Activated CD8-positive, alpha-beta T cell treated with anti-CD3 and anti-CD28 coated beads for 36 hours (primary cell): ENCODE measurements at regions of chr5 and their contacts with region 1.

Region 1: DNA sequence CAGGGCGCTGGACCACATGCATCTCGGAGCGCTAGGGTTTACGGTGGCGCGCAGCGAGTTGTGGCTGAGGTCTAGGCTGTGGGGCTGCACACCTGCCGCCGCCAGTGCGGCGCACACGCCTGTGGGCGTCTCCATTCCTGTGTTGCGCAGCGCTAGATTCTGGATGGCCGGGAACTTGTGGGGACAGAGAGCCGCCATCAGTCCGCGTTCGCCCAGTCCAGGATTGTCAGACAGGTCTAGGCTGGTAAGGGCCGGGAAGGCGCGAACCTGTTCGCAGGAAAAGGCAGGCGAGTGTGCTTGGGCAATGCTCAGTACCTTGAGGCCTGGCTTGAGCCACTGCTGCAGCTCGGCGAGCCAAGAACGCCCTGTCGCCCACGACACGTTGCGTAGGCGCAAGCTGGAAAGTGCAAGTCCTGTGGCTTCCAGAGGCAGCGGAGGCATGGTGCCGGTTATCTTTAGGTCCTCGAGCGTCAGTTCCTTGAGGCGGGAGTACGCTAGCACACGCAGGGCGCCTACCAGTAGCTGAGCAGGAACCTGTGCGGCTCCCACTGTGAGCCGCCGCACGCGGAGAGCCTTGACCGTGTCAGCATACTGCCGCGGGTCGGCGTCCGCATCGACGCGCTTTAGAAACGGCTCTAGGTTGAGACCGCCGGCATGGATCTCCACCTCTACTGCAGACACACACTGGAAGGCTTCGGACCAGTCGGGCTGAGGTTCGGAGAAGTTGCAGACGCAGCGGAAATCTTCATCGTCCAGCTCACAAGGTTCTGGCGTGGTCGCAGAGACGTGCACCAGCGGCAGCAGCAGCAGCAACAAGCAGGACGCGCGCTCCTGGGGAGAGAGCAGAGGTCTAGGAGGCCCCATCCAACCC is 590 bp downstream of the CD14 start:
- DNase-seq: peak; percentile 68
- ATAC-seq: peak; percentile 65
- H3K4me3 Mint-ChIP-seq: peak overlapping the region; percentile 74
- H3K27ac Mint-ChIP-seq: peak overlapping the region; percentile 71
- H3K4me1 Mint-ChIP-seq: peaks cover 28% of the 10 kb centered on the region
- H3K27me3 Mint-ChIP-seq: peaks cover 17% of the 10 kb centered on the region
- CTCF ChIP-seq: no peak

Region 2: GRCh38 chr5:140557136-140557805 is 75.1 kb before region 1 on chr5 and contains the start of gene SRA1:
- CTCF ChIA-PET with region 1: interaction called, 6 read pairs
- POLR2A ChIA-PET with region 1: interaction called, 4 read pairs
- intact Hi-C with region 1: loop called (anchors 5 kb)
- DNase-seq: peak; percentile 92
- ATAC-seq: peak; percentile 88
- H3K4me3 Mint-ChIP-seq: peak within 1 kb of the TSS; percentile 81
- H3K27ac Mint-ChIP-seq: peak within 1 kb of the TSS; percentile 89
- H3K4me1 Mint-ChIP-seq: peaks cover 39% of the 10 kb centered on the region
- H3K27me3 Mint-ChIP-seq: no peaks in the 10 kb centered on the region
- CTCF ChIP-seq: no peak
- total RNA-seq, gene SRA1: 47.8 to 49.5 TPM

Region 3: DNA sequence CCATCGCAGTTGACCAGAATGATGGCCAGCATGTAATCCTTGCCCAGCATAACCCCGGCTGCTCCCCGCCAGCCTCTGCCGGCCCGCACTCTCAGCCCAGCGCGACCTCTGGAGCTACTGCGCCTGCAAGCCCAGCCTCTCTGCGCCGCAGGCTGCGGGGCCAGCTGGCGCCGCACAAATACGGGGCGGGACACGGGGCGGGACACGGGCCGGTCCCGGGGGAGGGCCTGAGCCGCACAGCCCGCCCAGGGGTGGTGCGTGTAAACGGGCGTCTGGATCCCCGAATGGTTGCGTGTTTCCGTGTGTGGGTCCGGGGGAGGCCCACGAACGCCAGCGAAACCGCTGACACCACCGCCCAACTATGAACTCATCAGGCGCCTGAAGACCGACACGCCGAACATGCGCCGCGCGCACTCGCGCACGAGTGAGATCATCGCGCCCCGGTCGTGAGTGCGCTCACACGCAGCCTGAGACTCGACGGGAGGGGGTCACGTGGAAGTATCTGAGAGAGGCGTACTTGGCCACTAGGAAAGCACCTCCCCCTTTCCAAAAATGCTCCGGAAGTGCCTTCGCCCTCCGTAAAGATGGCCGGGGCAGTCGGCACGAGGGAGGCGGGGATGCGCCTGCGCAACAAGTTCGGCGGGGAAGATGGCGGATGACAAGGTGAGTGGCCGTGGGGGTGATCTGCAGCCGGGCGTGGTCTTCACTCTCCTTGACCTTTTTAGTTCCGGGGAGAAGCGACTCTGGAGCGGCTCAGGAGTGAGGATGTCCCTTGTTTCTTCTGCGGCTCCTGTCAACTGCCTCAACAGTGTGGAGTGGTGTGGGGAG is 68.0 kb before region 1 on chr5 and contains the starts of genes APBB3 and SLC35A4:
- CTCF ChIA-PET with region 1: interaction called, 12 read pairs
- POLR2A ChIA-PET with region 1: interaction called, 4 read pairs
- intact Hi-C with region 1: loop called (anchors 5 kb)
- DNase-seq: peak; percentile 97
- ATAC-seq: peak; percentile 95
- H3K4me3 Mint-ChIP-seq: peak within 1 kb of the TSS; percentile 88
- H3K27ac Mint-ChIP-seq: peak within 1 kb of the TSS; percentile 90
- H3K4me1 Mint-ChIP-seq: peaks cover 54% of the 10 kb centered on the region
- H3K27me3 Mint-ChIP-seq: no peaks in the 10 kb centered on the region
- CTCF ChIP-seq: no peak
- total RNA-seq, gene APBB3: 24.9 TPM
- total RNA-seq, gene SLC35A4: 72.9 to 73.6 TPM

Region 4: DNA sequence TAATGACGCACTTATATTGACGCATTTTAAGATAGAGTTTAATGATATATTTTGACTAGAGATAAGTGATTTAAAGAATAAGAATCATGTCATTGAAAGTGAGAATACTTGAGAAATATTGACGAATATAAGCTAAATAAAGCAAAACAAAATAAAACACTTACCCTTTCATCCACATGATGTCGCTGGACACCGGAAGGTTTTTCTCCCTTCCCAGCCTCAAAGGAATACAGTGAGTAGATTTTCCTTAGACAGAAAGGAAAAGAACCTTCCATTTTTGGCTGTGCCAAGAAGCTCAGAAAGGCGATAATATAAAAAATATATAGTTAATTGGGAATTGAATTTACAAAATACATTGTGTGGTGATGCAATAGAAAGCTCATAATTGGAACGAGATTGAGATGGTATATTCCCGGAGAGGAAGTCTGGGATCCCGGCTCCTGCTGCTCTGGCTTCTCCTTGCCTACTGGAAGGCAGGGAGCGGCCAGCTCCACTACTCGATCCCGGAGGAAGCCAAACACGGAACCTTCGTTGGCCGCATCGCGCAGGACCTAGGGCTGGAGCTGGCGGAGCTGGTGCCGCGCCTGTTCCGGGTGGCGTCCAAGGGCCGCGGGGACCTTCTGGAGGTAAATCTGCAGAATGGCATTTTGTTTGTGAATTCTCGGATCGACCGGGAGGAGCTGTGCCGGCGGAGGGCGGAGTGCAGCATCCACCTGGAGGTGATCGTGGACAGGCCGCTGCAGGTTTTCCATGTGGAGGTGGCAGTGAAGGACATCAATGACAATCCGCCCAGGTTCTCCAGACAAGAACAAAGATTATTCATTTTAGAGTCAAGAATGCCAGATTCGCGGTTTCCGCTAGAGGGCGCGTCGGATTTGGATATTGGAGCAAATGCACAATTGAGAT is 189.2 kb after region 1 on chr5 and contains the start of gene PCDHA5:
- CTCF ChIA-PET with region 1: no interaction called
- POLR2A ChIA-PET with region 1: no interaction called
- intact Hi-C with region 1: no loop called
- DNase-seq: peak; percentile 58
- ATAC-seq: no peak
- H3K4me3 Mint-ChIP-seq: no peak within 1 kb of the TSS
- H3K27ac Mint-ChIP-seq: no peak within 1 kb of the TSS
- H3K4me1 Mint-ChIP-seq: no peaks in the 10 kb centered on the region
- H3K27me3 Mint-ChIP-seq: peaks cover 6% of the 10 kb centered on the region
- CTCF ChIP-seq: no peak
- total RNA-seq, gene PCDHA5: not detected